Activated naive CD4-positive, alpha-beta T cell treated with anti-CD3 and anti-CD28 coated beads for 36 hours (primary cell): ENCODE measurements at regions of chr3 and their contacts with region 1.

Region 1: GRCh38 chr3:64262574-64263114 is 37.4 kb upstream of the PRICKLE2 start:
- DNase-seq: no peak
- H3K4me3 Mint-ChIP-seq: no peak overlapping the region
- H3K27ac Mint-ChIP-seq: no peak overlapping the region
- H3K4me1 Mint-ChIP-seq: no peaks in the 10 kb centered on the region
- H3K27me3 Mint-ChIP-seq: peaks cover 39% of the 10 kb centered on the region

Region 2: GRCh38 chr3:64238971-64239667 is 23.5 kb before region 1 on chr3:
- CTCF ChIA-PET with region 1: no interaction called
- intact Hi-C with region 1: no loop called
- DNase-seq: no peak
- H3K4me3 Mint-ChIP-seq: no peak overlapping the region
- H3K27ac Mint-ChIP-seq: no peak overlapping the region
- H3K4me1 Mint-ChIP-seq: no peaks in the 10 kb centered on the region
- H3K27me3 Mint-ChIP-seq: peaks cover 15% of the 10 kb centered on the region

Region 3: DNA sequence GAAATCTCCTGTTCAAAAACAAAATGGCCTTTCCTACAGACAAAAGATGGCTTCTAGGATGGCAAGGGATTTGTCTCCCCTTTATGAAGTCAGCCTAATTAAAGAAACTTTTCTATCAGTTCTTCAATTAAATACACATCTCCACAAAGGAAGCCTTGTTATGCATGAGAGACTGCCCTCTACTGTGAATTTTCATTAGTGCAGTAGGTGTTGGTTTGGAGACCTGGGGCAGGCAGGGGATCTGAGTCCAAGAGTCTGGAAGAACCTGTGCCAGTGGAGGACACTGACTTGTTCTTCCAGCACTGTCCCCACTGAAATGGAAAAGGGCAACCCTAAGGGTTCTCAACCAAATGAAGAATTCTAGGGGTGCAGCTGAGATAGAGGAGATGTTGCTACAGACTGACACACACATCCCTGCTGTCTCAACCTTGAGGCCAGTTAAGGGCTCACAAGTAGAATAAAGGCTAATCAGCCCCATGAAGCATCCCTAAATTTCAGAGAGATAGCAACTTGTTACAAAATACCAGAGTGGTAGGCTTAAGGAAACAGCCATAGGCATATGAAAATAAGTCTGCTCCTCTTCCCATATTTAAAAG is 136.7 kb after region 1 on chr3:
- CTCF ChIA-PET with region 1: no interaction called
- intact Hi-C with region 1: loop called (anchors 1 kb)
- DNase-seq: peak; percentile 24
- H3K4me3 Mint-ChIP-seq: no peak overlapping the region
- H3K27ac Mint-ChIP-seq: no peak overlapping the region
- H3K4me1 Mint-ChIP-seq: no peaks in the 10 kb centered on the region
- H3K27me3 Mint-ChIP-seq: no peaks in the 10 kb centered on the region